PC-9 (cell line): ENCODE measurements at regions of chr21 and their contacts with region 1.

Region 1: GRCh38 chr21:39175154-39175553 is 8.1 kb downstream of the PSMG1 start:
- DNase-seq: no peak
- H3K4me3 ChIP-seq: no peak overlapping the region
- H3K27ac ChIP-seq: no peak overlapping the region
- H3K4me1 ChIP-seq: no peaks in the 10 kb centered on the region
- H3K27me3 ChIP-seq: no peaks in the 10 kb centered on the region
- CTCF ChIP-seq: peak; percentile 57

Region 2: DNA sequence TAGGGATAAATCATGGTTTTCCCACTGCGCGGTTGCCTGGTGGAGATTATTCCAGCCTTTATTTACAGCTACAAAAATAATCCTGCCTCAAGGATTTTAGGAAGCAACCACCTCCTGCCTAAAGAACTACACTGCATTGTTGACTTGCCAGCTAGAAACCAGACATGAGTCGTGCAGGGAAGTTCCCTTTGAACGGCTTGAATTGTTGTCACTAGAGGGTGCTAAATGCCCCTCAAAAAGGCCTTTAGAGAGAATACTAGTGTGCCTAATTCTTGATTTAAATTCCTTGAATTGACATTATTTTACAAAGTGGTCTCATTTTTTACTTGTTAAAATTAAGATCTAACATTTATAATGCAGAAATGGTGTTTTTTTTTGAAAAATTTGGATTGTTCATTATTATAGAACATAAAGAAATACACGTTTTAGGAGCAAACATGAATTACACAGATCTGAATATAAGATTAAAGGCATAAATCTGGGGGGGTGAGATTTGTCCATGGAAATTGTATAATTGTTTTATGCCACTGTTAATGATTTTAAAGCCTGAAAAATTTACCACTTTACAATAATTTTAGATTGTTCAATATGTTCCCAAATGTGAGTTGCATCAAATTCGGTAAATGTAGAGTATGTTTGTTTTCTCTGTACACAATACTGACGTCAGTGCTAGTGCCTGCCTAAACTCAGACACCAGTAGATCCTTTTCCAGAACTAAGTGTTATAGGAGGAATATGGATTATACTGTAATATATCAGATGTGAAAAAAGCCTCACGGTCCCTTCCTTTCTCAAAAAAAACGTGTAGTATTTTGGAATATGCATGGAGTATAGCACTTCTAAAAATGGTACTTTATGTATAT is 669.3 kb before region 1 on chr21:
- CTCF ChIA-PET with region 1: no interaction called
- POLR2A ChIA-PET with region 1: no interaction called
- intact Hi-C with region 1: loop called (anchors 10 kb)
- DNase-seq: peak in 1 of 2 experiments; percentile 12
- H3K4me3 ChIP-seq: no peak overlapping the region
- H3K27ac ChIP-seq: no peak overlapping the region
- H3K4me1 ChIP-seq: no peaks in the 10 kb centered on the region
- H3K27me3 ChIP-seq: peaks cover 16% of the 10 kb centered on the region; the same call in 1 of the 2 replicates
- CTCF ChIP-seq: peak; percentile 63

Region 3: GRCh38 chr21:39066829-39067780 is 108.0 kb before region 1 on chr21:
- CTCF ChIA-PET with region 1: no interaction called
- POLR2A ChIA-PET with region 1: no interaction called
- intact Hi-C with region 1: no loop called
- DNase-seq: no peak
- H3K4me3 ChIP-seq: no peak overlapping the region
- H3K27ac ChIP-seq: no peak overlapping the region
- H3K4me1 ChIP-seq: no peaks in the 10 kb centered on the region
- H3K27me3 ChIP-seq: no peaks in the 10 kb centered on the region
- CTCF ChIP-seq: no peak